ENCODE measurements at regions of chr10 and their contacts with region 1.

Region 1: GRCh38 chr10:114526504-114527238 is 122.4 kb upstream of the AFAP1L2 start:
- DNase-seq: peak; percentile 95
- ATAC-seq: peak; percentile 93
- H3K4me3 Mint-ChIP-seq: peak overlapping the region; percentile 88
- H3K27ac Mint-ChIP-seq: peak overlapping the region; percentile 95
- H3K4me1 Mint-ChIP-seq: peaks cover 54% of the 10 kb centered on the region
- H3K27me3 Mint-ChIP-seq: no peaks in the 10 kb centered on the region

Region 2: GRCh38 chr10:113678690-113679462 is 847.8 kb before region 1 on chr10:
- CTCF ChIA-PET with region 1: no interaction called
- POLR2A ChIA-PET with region 1: no interaction called
- intact Hi-C with region 1: loop called in 1 of 2 experiments (anchors 10 kb)
- DNase-seq: peak; percentile 84
- ATAC-seq: peak; percentile 16
- H3K4me3 Mint-ChIP-seq: peak overlapping the region; percentile 80
- H3K27ac Mint-ChIP-seq: peak overlapping the region; percentile 74
- H3K4me1 Mint-ChIP-seq: peaks cover 39% of the 10 kb centered on the region
- H3K27me3 Mint-ChIP-seq: peaks cover 5% of the 10 kb centered on the region

Region 3: DNA sequence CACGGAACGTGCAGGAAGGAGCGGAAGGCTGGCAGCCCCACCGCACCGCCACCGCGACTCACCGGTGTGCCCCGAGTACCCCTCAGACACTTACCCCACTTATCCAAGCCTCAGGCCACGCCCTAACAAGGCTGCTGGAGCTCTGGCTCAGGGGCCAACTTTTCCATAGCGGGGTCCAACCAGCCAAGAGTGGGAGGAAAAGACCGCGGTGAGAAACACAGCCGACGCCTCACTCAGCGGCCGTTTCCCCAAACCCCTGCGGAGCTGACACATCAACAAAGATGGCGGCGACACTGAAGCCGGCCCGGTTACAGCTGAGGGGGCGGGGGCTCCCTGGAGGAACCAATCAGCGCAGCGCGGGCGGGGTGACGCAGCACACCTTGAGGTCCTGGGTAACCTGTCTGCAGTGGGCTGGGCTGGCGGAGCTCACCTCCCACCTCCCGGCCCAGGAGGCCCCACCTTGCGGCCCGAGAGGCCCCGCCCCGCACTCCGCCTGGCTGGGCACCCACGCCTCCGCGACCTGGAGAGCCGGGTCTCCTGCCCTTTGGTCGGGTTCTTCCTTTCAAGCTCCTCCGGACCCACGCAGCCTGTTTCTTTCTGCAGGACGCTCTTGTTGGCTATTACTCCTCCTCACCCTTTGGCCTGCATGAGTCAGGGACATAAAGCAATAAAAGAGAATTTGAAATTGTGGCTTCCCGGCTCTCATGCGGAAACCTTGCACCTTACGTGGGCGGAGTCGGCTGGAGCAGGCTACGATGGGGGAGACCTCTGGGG is 352.6 kb before region 1 on chr10 and contains the start of gene CCDC186:
- CTCF ChIA-PET with region 1: no interaction called
- POLR2A ChIA-PET with region 1: no interaction called
- intact Hi-C with region 1: loop called in 1 of 2 experiments (anchors 5 kb)
- DNase-seq: peak; percentile 99
- ATAC-seq: peak; percentile 100
- H3K4me3 Mint-ChIP-seq: peak within 1 kb of the TSS; percentile 100
- H3K27ac Mint-ChIP-seq: peak within 1 kb of the TSS; percentile 99
- H3K4me1 Mint-ChIP-seq: peaks cover 32% of the 10 kb centered on the region
- H3K27me3 Mint-ChIP-seq: no peaks in the 10 kb centered on the region
- total RNA-seq, gene CCDC186: 9.1 to 13.9 TPM

Region 4: DNA sequence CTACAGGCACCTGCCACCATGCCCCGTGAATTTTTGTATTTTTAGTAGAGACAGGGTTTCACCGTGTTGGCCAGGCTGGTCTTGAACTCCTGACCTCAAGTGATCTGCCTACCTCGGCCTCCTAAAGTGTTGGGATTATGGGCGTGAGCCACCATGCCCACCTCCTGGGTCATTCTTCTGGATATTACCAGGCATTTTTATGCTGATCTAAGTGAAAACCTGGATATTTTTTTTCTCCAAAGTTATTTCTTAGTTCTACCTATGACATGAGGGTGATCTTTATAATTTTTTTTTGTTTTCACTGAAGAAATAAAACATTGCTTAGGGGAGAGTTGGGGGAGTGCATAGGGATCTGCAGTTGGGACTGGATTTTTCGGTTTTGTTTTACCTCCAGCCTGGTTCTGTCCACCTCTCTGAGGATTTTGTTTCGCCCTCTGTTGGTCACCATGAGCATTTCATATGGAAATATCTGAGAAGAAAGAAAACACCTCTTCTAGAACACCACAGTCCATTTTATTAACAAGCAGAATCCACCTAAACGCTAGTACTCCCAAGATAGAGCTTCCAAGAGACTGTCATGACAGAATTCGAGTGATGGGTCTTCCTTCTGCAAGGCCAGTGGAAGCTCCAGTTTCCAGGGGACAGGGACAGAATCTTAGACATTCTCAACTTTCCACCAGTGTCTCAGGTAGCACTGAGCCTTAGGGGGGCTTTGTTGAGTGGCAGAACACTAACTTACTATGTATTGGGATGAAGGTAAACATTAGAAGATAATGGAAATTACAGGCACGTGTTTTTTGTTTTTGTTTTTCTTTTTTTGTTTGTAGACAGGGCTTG is 89.0 kb before region 1 on chr10:
- CTCF ChIA-PET with region 1: no interaction called
- POLR2A ChIA-PET with region 1: no interaction called
- intact Hi-C with region 1: no loop called
- DNase-seq: no peak
- ATAC-seq: no peak
- H3K4me3 Mint-ChIP-seq: no peak overlapping the region
- H3K27ac Mint-ChIP-seq: peak overlapping the region; percentile 5
- H3K4me1 Mint-ChIP-seq: no peaks in the 10 kb centered on the region
- H3K27me3 Mint-ChIP-seq: no peaks in the 10 kb centered on the region

Region 5: DNA sequence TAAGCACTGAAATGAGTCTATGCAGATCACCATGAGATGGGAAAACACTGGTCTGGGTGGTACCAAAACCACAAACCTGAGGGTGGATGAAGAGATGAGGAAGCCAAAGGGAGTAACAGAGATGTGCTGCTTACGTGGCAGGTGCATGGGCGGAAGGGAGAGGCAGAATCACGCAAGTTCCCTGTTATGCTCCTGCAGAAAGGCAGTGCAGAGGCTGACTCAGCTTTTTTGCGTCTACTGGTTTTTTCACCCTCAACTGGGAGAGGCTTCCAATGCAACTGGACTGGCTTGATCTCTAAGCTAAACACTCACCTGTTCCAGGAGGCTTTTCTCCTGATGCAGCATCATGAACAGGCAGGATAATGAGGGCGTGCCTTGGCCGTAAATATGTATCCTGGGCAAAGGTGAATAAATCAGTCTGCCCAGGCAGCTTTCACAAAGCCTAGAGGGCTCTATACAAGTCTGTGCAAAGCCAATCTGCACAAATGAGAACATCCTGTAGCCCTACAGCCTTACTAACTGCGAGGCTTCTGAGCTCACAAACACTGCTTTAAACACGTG is 27.0 kb before region 1 on chr10:
- CTCF ChIA-PET with region 1: interaction called, 187 read pairs
- POLR2A ChIA-PET with region 1: interaction called, 10 read pairs
- intact Hi-C with region 1: loop called (anchors 1 kb)
- DNase-seq: peak; percentile 89
- ATAC-seq: peak; percentile 54
- H3K4me3 Mint-ChIP-seq: peak overlapping the region; percentile 61
- H3K27ac Mint-ChIP-seq: peak overlapping the region; percentile 99
- H3K4me1 Mint-ChIP-seq: peaks cover 92% of the 10 kb centered on the region
- H3K27me3 Mint-ChIP-seq: no peaks in the 10 kb centered on the region

Region 6: DNA sequence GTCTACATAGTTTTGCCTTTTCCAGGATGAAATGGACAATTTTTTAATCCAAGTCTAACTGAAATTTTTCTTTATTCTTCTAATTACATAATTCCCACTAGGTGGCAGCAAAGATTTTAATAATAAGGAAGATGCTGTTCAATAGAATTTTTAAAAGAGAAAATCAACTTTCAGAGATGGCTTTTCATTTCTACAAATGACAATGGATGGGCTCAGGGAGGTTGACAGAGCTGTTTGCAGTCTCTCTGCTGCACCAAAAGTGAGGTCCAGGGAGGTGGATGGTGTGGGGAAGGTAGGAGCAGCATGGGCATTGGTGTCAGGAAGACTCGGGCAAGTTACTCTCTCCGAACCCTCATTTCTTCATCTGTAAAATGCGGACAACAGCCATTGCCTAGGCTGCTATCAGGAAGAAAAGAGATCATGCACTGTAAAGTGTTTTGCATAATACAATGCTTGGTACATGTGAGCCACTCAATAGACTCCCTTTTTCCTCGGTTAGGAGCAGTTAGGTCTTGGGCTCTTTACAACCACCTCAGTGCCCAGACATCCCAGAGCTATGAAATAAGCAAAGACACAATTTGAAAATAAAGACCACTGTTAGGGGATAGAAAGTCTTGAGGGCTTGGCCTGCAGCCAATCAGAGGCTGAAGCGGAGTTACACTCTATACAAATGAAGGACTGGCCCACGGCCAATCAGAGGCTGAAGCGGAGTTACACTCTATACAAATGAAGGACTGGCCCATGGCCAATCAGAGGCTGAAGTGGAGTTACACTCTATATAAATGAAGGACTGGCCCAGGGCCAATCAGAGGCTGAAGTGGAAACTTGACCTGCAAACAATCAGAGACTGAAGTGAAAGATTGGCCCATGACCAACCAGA is 24.3 kb after region 1 on chr10:
- CTCF ChIA-PET with region 1: interaction called, 31 read pairs
- POLR2A ChIA-PET with region 1: interaction called, 5 read pairs
- intact Hi-C with region 1: no loop called
- DNase-seq: no peak
- ATAC-seq: no peak
- H3K4me3 Mint-ChIP-seq: no peak overlapping the region
- H3K27ac Mint-ChIP-seq: no peak overlapping the region
- H3K4me1 Mint-ChIP-seq: peaks cover 28% of the 10 kb centered on the region
- H3K27me3 Mint-ChIP-seq: no peaks in the 10 kb centered on the region